ENCODE measurements at regions of chr15 and their contacts with region 1.

Region 1: DNA sequence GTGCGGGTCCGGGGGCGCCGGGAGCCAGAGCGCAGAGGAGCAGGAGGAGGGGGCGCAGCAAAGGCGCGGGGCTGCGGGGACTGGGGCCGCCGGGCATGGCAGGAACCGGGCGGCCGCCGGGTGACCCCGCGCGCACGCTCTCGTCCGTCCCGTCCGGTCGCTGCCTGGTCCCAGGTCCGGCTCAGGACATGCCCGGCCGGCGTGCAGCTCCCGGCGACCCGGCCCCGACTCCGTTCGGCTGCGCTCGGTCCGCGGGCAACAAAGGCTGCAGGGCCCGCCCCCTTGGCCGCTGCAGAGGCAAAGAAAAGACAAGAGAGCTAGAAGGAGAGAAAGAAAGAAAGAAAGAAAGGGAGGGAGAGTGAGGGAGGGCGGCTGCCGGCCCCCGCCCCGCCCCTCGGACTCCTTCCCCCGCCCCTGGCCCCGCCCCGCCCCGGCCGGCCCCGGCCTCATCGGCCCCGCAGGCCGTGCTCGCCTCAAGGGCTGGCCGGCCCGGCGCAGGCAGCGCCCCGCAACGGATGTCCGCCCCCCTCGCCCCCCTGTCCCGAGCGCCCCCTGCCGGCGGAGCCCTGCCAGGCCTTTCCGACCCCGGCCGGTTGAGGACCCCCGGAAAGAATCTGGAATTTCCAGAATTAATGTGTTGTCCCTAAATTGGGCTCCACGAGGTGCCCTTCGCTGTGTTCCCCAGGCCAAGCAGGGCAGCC is at the start of gene ADAMTS7:
- DNase-seq: peak; percentile 90
- ATAC-seq: peak; percentile 87
- total RNA-seq, gene ADAMTS7: 32.1 TPM

Region 2: GRCh38 chr15:78618490-78618934 is 192.8 kb before region 1 on chr15:
- intact Hi-C with region 1: loop called (anchors 10 kb)
- DNase-seq: peak; percentile 81
- ATAC-seq: peak; percentile 78

Region 3: DNA sequence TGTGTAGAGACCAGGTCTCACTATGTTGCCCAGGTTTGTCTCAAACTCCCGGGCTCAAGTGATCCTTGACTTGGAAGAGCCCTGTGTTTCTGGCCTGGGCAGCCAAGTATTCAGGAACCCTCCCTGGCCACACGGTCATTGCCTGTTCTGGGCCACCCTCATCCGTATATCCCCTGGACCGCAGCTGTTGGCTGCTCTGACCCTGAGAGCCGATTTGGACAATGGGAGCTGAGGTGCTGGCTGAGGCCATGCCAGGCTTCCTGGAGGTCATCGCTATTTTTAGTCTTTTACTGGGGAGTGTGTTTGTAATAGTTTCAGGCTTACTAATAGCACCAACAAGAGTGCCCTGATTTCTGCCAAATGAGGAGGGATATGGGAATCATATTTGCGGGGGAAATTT is 60.7 kb before region 1 on chr15:
- intact Hi-C with region 1: loop called (anchors 5 kb)
- DNase-seq: peak; percentile 52
- ATAC-seq: peak; percentile 58

Region 4: GRCh38 chr15:78761891-78762385 is 49.3 kb before region 1 on chr15:
- intact Hi-C with region 1: loop called (anchors 2 kb)
- DNase-seq: no peak
- ATAC-seq: no peak

Region 5: DNA sequence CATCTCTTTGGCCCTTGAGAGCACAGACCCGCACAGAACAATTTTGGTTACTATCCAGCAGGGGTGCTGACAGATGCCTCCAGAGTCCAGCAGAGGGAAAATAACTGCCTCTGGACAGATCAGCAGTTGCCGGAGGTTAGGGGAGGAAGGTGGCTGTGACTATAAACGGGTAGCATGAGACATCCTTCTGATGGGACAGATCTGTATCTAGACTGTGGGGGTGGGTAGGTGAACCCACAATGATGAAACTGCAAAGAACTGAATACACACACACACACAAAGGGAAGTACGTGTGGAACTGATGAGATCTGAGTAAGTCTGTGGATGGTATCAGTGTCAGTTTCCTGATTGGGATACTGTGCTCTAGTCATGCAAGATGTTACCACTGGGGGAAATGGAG is 21.2 kb before region 1 on chr15:
- intact Hi-C with region 1: no loop called
- DNase-seq: no peak
- ATAC-seq: peak; percentile 71

Region 6: DNA sequence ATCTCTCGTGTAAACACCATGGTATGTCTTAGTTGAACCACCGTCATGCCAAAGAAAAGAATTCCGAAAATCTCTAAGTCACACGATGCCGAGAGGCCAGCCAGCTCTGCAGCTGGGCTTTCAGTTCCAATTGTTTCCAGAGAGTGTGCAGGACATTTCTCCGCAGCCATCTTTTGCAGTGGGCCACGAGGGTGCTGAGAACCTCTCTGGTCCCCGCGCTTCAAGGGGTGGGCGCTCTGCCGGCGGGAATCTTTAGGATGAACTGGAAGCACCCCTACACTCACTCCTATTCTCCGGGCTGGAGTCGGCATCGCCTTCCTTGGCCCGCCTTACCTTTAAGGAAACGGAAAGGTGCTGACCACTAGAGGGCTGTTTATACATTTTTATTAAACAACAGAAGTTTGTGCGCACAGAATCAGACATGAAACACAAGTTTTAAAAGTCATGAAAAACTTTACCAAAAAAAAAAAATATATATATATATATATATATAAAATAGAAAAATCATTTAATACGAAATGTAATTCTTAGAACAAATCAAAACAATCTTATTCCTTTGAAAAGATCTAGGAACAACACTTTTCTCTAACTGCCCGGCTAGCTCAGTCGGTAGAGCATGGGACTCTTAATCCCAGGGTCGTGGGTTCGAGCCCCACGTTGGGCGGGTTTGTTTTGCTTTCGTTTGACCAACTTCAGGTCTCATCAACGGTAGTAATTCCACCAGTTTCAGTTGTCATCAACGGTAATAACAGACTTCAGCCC is 48.9 kb after region 1 on chr15:
- intact Hi-C with region 1: no loop called
- DNase-seq: peak; percentile 79
- ATAC-seq: peak; percentile 92

Region 7: DNA sequence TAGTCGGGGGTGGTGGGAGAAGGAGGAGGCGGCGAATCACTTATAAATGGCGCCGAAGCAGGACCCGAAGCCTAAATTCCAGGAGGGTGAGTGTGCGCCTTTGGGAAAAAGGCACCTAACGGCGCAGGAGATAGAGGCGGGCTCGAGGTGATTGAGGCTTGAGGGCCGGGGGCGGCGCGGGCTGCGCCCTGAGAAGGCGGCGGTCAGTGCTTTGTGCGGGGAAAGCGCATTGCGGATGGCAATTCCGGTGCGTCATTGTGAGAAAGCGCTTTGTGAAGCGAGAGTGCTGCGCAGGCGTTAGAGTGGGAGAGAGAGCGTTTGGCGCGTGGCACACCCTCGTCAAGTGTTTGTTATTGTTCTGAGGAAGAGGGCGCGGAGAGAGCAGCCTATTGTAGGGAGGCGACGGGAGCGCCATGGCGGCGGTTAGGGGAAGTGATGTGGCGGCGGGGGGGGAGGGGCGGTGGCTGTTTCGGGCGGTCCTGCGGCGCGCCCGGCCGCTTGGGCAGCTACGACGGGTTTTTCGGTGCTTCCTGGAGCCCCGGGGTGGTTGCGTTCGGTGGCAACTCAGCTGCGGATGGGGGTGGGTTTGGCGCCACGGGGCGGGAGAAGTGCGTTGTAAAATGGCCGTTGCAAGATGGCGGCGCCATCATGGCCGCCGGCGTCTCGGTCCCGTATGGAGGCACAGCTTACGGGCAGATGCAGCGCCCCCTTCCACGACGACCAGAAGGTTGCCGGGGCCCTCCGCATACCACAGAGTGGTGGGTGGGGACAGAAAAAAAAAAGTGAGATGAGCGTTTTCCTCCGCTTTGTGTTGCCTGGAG is 61.9 kb after region 1 on chr15:
- intact Hi-C with region 1: loop called (anchors 5 kb)
- DNase-seq: peak; percentile 95
- ATAC-seq: peak; percentile 82